Calu3 (cell line): ENCODE measurements at regions of chr1 and their contacts with region 1.

Region 1: DNA sequence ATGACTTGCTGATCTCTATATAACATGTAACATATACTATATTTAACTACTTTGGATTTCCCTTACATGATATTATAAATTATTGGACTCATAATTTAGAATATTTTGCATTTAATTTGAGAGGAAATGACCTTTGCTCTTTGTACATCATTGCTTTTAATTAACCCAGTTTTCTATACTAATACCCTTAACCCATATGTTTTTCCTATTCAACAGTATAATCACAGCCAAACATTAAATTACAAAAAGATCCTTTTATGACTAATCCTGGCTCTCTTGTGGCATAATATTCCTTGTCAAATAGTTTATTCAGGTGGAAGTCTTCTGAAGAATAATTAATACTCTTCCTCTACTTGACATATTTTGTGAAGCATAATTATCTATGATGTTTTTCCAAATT is 56.0 kb upstream of the GPR52 start:
- DNase-seq: no peak
- H3K4me3 Mint-ChIP-seq: no peak overlapping the region
- H3K27ac Mint-ChIP-seq: no peak overlapping the region
- H3K4me1 Mint-ChIP-seq: no peaks in the 10 kb centered on the region
- H3K27me3 Mint-ChIP-seq: no peaks in the 10 kb centered on the region
- CTCF ChIP-seq: no peak

Region 2: DNA sequence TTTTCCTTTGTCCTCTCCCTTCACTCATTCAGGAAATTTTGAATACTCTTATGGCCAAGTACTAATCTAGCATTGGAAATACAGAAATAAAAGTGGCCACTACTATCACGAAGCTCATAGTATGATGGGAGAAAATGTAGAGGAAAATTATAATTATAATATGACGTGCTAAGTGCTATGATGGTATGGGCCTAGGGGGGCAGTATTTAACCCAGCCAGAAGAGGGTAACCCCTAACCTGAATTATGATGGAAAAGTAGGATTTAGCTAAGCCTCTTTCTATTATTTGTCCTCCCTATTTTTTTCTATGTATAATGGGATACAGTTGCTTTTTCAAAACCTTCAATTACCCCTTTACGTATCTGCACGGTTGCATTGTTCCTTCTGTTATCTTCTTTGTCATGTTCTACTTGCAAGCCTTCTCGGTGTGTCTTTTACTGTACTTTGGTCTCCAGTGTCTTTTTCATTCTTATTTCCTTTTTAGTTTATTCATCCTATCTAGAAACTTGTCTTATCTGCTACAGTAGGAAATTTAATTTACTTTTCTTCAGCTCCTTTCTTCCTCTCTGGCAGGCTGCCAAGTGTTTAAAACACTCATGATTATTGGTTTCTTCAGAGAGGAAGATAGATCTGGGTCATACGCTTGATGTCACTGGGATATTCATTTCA is 32.8 kb before region 1 on chr1:
- CTCF ChIA-PET with region 1: no interaction called
- intact Hi-C with region 1: loop called (anchors 1 kb)
- DNase-seq: peak; percentile 48
- H3K4me3 Mint-ChIP-seq: no peak overlapping the region
- H3K27ac Mint-ChIP-seq: peak overlapping the region; percentile 16
- H3K4me1 Mint-ChIP-seq: peaks cover 14% of the 10 kb centered on the region
- H3K27me3 Mint-ChIP-seq: no peaks in the 10 kb centered on the region
- CTCF ChIP-seq: no peak